Mucosa of descending colon (tissue), 3 donors: ENCODE measurements at regions of chr6 and their contacts with region 1.

Region 1: GRCh38 chr6:136235217-136235532 is 14.9 kb downstream of the MTFR2 start:
- DNase-seq: no peak
- ATAC-seq: no peak
- H3K4me3 ChIP-seq: no peak overlapping the region
- H3K4me1 ChIP-seq: no peaks in the 10 kb centered on the region
- CTCF ChIP-seq: no peak

Region 2: DNA sequence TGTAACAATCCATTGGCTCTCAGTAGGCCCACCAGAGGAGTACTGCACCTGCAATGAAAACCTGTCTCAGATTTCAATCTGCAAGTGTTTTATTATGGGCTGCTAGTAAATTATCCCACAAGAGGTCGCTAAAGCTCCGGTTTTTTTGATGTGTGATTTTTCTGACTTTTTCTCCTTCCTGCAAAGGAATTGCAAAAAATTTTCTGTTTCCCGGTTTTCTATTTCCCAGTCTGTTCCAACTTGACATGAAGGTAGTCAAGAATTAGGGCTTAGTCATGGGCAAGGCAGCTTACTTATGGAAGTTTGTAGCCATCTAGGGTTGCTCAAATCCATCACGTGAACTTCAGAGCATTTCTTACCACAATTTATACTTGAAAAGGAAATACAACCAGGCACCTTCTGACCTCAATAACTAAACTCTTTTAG is 699.2 kb before region 1 on chr6:
- intact Hi-C with region 1: loop called in 1 of 2 experiments (anchors 10 kb)
- DNase-seq: peak in 1 of 3 donors; percentile 42
- ATAC-seq: peak; percentile 28
- H3K4me3 ChIP-seq: no peak overlapping the region
- H3K4me1 ChIP-seq: no peaks in the 10 kb centered on the region
- CTCF ChIP-seq: peak; percentile 29

Region 3: GRCh38 chr6:135811644-135812526 is 423.3 kb before region 1 on chr6:
- intact Hi-C with region 1: no loop called
- DNase-seq: no peak
- ATAC-seq: no peak
- H3K4me3 ChIP-seq: no peak overlapping the region
- H3K4me1 ChIP-seq: no peaks in the 10 kb centered on the region
- CTCF ChIP-seq: no peak

Region 4: GRCh38 chr6:136007345-136007744 is 227.8 kb before region 1 on chr6:
- intact Hi-C with region 1: no loop called
- DNase-seq: no peak
- ATAC-seq: no peak
- H3K4me3 ChIP-seq: no peak overlapping the region
- H3K4me1 ChIP-seq: no peaks in the 10 kb centered on the region
- CTCF ChIP-seq: no peak